ENCODE measurements at regions of chr1 and their contacts with region 1.

Region 1: DNA sequence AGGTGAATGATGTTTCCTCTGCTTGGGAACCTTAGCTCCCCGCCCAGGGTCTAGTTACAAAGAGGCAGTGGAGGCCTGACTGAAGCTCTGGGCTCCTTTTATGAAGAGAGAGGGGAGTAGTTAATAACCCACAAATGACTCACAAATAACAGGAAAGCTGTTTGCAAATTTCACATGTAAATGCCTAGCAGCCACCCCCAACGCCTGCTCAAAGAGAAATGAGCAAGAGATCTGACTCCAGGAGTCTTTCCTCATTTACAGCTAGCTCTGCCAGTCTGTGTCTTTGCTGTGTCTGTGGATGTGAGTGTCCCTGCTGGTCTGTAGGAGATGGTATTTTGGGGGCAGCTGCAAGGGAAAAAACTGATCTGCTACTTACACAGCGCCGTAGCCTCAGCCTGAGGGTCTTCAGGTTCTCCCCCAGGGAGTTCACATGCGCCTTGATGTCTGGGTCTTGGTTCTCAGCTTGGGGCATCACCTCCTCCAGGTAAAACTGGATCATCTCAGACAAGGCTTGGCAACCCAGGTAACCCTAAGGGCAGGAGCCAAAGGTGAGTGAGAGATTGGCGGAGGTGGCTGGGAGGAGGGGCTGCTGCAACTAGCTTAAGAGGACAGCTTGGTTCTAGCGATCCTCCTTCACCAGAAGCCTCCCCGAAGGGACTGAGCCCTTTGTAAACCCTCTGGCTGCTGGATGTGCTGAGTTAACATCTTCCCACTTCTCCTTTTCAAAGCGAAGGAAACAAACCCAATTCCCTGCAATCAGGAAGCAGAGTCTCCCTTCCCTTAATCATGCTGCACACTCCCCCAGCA is at the start of gene IL19:
- H3K4me3 Mint-ChIP-seq: peak within 1 kb of the TSS; percentile 91
- H3K27ac Mint-ChIP-seq: peak within 1 kb of the TSS; percentile 98
- H3K4me1 Mint-ChIP-seq: peaks cover 96% of the 10 kb centered on the region
- H3K27me3 Mint-ChIP-seq: no peaks in the 10 kb centered on the region

Region 2: DNA sequence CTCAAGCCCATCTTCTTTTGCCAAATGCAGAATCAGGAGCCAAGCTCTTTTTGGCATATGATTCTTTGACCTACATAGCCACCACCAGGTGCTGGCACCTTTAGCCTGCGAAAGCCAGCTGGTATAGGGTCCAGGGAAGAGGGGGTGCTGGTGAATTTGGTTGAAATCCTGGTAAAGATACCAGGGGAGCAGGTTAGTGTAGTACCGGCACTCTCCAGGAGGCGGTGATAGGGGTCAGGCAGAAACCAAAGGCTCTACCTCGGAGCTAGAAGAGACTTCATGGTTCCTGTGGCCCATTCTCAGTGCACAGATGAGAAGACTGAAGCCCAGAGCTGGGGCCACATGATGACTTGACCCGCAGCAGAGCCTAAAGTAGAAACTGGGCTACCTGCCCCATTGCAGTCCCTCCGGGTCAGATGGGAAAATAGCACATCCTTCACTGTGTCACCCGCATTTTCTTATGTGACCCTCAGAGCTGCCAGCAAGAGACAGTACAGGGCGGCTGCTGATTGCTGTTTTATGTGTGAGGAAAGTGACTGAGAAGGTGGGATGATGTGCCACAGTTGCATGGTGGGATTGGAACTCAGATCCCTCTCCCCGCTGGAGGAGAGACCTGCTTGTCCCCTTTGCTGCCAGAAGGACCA is 36.1 kb before region 1 on chr1:
- intact Hi-C with region 1: loop called (anchors 5 kb)
- H3K4me3 Mint-ChIP-seq: no peak overlapping the region
- H3K27ac Mint-ChIP-seq: no peak overlapping the region
- H3K4me1 Mint-ChIP-seq: peaks cover 82% of the 10 kb centered on the region
- H3K27me3 Mint-ChIP-seq: no peaks in the 10 kb centered on the region

Region 3: GRCh38 chr1:206890690-206891089 is 120.0 kb after region 1 on chr1:
- intact Hi-C with region 1: no loop called
- H3K4me3 Mint-ChIP-seq: no peak overlapping the region
- H3K27ac Mint-ChIP-seq: peak overlapping the region; percentile 13
- H3K4me1 Mint-ChIP-seq: peaks cover 17% of the 10 kb centered on the region
- H3K27me3 Mint-ChIP-seq: peaks cover 38% of the 10 kb centered on the region